ENCODE measurements at regions of chr7 and their contacts with region 1.

Region 1: GRCh38 chr7:123494193-123494796 is 40.1 kb downstream of the IQUB start:
- DNase-seq: peak in 1 of 3 donors; percentile 59
- ATAC-seq: peak; percentile 37
- H3K4me3 ChIP-seq: no peak overlapping the region
- H3K4me1 ChIP-seq: no peaks in the 10 kb centered on the region
- CTCF ChIP-seq: peak; percentile 38

Region 2: GRCh38 chr7:123534383-123535260 is 40.3 kb after region 1 on chr7 and contains the start of gene IQUB:
- intact Hi-C with region 1: loop called in 1 of 2 experiments (anchors 5 kb)
- DNase-seq: peak; percentile 98 to 100 (median 99)
- ATAC-seq: peak; percentile 96
- H3K4me3 ChIP-seq: peak within 1 kb of the TSS; percentile 22
- H3K4me1 ChIP-seq: peaks cover 12% of the 10 kb centered on the region
- CTCF ChIP-seq: no peak
- total RNA-seq, gene IQUB: 0.26 to 0.41 TPM in 2 of 3 donors, not detected in the other